Lower leg skin (tissue), 4 donors: ENCODE measurements at regions of chr11 and their contacts with region 1.

Region 1: DNA sequence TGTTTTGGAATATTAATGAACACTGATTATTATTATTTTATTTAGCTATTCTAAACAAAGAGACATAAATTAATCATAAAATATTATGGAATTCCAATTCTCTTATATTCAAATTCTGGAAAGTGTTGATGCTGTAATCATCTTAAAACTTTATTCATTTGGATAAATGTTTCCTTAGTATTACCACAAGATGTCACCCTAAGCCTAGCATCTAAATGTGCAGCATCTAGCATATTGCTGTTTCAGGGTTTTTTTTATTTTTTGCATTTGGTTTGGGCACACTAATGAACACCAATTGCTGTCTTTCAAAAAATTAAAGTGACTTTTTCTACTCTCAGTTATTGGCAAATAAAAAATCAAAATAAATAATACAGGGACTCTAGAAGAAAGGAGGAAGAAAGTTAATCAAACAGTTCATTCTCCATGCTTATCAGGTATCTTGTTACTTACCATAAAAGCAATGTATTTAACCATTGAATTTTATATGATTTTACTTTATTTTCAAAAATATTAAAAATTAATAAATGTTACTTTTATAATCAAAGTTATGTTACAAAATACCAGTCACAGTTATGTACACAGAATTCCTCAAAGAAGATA is 31.8 kb downstream of the DLG2 start:
- DNase-seq: no peak
- H3K4me3 ChIP-seq: no peak overlapping the region
- CTCF ChIP-seq: no peak
- POLR2A ChIP-seq: no peak

Region 2: GRCh38 chr11:85854557-85855340 is 259.4 kb after region 1 on chr11:
- intact Hi-C with region 1: loop called (anchors 10 kb)
- DNase-seq: peak; percentile 87 to 98
- H3K4me3 ChIP-seq: peak overlapping the region; percentile 38
- CTCF ChIP-seq: peak in 1 of 3 donors; percentile 52
- POLR2A ChIP-seq: no peak